Naive thymus-derived CD8-positive, alpha-beta T cell (primary cell): ENCODE measurements at regions of chr1 and their contacts with region 1.

Region 1: DNA sequence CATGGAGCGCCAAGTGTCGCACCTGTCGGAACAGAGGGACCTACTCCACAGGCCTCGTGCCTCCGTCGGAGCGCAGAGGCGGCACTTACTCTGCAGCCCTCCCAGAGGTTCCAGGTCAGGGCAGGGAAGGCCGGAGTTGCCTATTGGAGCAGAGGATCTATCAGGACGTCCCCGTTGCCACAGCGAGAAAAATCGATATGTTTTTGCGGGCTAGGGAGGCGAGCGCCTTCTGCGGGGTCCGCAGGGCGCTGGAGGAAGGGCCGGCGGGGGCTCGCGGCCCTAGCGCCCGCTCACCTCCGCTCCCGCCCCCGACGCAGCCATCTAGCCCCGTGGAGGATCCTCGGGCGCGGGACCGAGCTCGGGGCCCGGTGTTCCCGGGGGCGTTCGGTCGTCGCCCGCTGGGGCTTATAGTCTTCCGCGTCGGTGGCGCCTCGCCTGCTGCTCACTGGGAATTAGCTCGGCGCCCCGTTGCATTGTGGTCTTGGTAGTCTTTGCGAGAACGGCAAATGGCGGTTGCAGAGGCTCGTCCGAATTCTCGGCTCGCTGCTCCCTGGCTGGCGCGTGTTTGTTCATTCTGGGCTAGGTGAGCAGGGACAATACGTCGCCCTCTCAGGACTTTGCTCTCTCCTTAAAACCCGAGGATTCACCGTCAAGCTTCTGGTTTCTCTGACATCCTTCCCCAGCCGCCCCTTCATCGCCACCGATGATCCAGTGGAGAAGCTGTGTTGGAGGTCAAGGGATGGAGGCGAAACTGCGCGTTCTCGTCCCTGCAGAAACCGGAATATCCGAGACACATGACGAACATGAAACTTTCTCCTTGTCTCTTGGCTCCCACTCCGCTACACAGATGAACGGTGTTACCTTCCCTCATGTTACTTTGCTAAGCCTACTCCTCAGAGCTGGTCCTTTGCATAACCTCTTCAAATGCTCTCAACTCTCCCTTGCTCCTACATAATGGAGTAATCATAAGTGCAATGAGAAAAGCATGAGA is at the start of gene JTB:
- DNase-seq: peak; percentile 73 to 92 (median 78)
- ATAC-seq: peak; percentile 96
- H3K4me3 Mint-ChIP-seq: peak within 1 kb of the TSS; percentile 91 to 99 (median 97)
- H3K27ac Mint-ChIP-seq: peak within 1 kb of the TSS; percentile 87 to 99 (median 96)
- H3K4me1 Mint-ChIP-seq: peaks cover 11 to 42% (median 37%) of the 10 kb centered on the region in 4 donors
- H3K27me3 Mint-ChIP-seq: no peaks in the 10 kb centered on the region
- polyA plus RNA-seq, gene JTB: 302 to 384 (median 322) TPM

Region 2: DNA sequence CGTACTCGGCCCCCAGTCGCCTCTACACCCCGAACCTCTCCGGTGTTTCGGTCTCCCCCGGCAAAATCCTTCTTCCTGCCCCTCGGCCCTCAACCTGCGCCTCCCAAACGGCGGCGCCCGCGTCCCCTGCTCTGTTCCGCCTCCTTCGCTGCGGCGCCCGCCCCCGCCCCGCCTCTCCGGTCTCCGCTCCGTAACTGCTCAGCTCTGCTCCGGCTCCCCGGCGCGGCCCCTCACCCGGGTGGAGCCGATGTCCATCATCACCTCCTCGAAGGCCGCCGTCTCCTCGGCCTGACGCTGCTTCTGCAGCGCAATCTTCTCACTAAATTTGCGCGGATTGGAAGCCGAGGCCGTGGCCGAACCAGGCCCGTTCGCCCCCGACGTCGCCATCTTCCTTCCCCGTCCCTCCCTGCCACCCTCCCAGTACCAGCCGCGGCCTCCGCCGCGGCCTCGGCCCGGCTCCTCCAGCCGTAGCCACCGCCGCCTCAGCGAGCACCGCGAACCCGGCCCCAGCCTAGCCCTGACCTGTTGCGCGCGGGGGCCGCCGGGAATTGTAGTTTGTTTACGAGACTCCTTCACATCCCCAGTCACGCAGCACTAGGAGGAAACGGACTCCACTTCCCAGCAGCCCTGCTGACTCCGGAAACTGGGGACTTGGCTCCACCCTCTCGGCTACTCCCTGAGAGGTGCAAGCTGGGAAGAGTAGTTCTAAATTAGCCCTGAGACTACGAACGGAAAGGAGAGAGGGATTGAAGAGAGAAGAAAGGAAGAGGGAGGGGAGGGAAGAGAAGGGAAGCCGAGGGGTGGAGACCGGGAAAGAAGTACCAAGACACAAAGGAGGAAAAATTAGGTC is 19.2 kb before region 1 on chr1 and contains the start of gene CRTC2:
- POLR2A ChIA-PET with region 1: interaction called, 143 read pairs
- DNase-seq: peak; percentile 91 to 98 (median 96)
- ATAC-seq: peak; percentile 84 to 88
- H3K4me3 Mint-ChIP-seq: peak within 1 kb of the TSS; percentile 86 to 100 (median 98)
- H3K27ac Mint-ChIP-seq: peak within 1 kb of the TSS; percentile 85 to 98 (median 96)
- H3K4me1 Mint-ChIP-seq: peaks cover 37 to 79% (median 63%) of the 10 kb centered on the region in 4 donors
- H3K27me3 Mint-ChIP-seq: no peaks in the 10 kb centered on the region
- polyA plus RNA-seq, gene CRTC2: 21.4 to 49.6 (median 27.1) TPM

Region 3: DNA sequence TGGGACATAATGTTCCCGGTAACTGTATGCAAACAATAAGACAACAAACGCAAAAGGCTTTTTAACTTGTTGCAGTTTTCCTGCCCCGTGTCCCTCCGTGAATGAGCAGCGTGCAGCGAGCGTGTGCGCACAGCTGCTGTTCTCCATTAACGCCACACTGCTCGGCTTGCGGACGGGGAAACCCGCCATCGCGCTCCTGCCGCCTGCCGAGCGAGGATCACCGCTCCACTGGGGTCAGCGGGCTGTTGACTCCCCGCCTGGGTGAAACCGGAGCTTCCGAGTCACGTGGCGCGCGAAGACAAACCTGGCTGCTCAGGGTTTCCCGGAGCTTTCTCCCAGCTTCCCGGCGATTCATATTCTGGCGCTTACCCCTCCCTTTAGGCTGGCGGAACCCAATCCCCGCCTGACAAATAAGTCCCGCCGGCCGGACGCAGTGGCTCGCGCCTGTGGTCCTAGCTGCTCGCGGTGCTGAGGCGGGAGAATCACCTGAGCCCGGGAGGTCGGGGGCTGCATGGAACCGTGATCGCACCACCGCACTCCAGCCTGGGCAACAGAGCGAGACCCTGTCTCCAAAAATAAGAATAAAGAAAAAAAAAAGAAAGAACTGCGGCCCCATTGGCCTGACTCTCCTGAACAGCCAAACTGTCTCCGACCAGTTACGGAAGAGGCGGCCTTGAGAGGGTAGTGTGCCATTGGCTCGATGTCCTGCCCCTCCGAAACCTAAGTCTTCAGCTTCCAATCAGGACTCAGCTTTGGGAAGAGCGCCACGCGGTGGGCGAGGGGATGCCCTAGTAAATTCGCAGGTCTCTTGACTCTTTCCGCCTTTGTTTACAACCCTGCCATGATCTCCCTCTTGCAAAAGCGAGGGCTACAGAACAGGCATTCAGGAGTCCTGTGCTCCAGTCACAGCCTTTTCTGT is 10.2 kb before region 1 on chr1 and contains the start of gene CREB3L4:
- POLR2A ChIA-PET with region 1: interaction called, 143 read pairs
- DNase-seq: peak; percentile 68 to 93 (median 83)
- ATAC-seq: peak; percentile 88 to 91
- H3K4me3 Mint-ChIP-seq: peak within 1 kb of the TSS; percentile 87 to 97 (median 94)
- H3K27ac Mint-ChIP-seq: peak within 1 kb of the TSS; percentile 92 to 99 (median 95)
- H3K4me1 Mint-ChIP-seq: peaks cover 31 to 68% (median 64%) of the 10 kb centered on the region in 4 donors
- H3K27me3 Mint-ChIP-seq: no peaks in the 10 kb centered on the region
- polyA plus RNA-seq, gene CREB3L4: 4.3 to 6.0 (median 4.4) TPM